ENCODE measurements at regions of chr16 and their contacts with region 1.

Region 1: DNA sequence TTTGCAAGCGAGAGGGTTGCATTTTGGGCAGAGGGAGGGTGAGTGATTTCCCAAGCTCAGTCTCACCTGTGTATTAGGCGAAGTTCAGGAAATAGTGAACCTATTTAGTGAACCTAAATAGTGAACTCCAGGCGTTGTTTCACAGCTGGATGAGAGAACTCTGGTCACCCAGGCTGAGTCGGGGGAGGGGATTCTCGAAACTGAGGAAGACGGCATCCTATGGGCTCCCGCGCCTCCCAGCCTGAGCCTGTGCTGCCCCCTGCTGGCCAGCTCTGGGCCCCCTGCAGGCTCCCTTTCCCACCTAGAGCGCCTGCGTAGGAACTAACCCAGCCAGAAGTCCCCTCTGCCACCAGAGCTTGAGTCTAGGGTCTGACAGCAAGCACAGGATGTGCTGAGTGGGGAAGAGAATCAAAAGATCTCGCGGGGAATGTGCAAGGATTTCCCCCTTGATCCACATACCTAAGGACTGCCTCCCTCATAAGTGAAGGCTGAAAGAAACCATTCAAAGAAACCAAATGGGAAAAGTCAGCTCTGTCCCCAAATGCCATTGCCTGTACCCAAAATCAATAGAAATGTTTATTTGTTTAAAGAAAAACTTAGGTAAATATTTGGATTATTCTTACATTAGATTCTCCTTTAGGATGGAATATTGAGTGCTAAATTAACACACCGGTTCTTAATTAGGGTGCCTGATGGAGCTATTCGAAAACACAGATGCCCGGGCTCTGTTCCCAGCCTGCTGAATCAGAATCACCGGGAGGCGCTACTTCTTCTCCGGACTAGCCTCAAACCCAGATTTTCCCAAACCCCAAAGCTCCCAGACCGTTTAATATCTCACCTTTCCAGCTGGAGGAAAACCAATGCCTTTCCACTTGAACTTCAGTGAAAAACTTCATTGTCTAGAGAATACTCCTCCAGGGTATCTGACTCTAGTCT is 14.8 kb upstream of the MARVELD3 start:
- DNase-seq: peak; percentile 87
- H3K4me3 Mint-ChIP-seq: no peak overlapping the region
- H3K27ac Mint-ChIP-seq: no peak overlapping the region
- H3K4me1 Mint-ChIP-seq: peaks cover 14% of the 10 kb centered on the region
- H3K27me3 Mint-ChIP-seq: peaks cover 2% of the 10 kb centered on the region

Region 2: DNA sequence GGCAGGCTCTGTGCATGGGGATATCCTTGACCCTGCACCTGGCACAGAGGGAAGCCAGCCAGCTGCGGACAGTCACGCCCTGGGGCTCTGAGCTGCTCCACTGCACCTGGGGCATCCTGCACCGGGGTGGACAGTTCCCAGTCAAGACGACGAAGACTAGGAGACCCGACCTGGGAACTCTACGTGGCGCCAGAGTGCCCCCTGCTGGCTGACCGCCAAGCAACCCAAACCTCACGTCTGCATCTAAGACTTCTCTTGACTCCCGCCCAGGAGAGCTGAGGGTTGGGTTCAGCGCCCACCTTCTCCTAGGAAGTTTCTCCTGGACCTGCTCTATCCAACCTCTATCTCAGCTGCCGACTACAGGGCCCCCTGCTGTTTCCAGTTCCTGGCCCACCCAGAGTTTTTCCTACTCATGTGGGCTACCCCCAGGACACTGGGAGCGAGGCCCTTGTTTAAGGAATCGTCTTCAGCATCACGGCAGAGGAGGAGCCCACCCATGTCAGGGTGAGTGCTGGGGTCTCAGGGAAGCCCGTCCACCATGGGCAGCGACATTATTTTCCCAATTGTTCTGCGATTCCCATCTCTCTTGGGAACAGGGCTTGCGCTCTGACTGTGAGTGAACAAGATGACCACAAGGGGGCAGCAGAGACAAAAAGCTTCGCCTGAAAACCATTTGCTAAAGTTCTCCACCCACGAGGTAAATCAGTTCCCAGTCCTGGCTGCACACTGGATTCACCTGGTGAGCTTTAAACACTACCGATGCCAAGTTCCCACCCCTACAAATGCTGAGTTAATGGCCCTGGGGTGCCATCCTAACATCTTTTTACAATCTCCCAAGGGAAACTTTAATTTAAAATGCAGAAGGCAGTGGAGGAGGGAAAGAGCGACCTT is 198.7 kb before region 1 on chr16:
- CTCF ChIA-PET with region 1: interaction called, 35 read pairs
- intact Hi-C with region 1: loop called (anchors 2 kb)
- DNase-seq: peak; percentile 78
- H3K4me3 Mint-ChIP-seq: no peak overlapping the region
- H3K27ac Mint-ChIP-seq: no peak overlapping the region
- H3K4me1 Mint-ChIP-seq: peaks cover 4% of the 10 kb centered on the region
- H3K27me3 Mint-ChIP-seq: peaks cover 36% of the 10 kb centered on the region

Region 3: GRCh38 chr16:71461686-71462648 is 149.2 kb before region 1 on chr16 and contains the start of gene ZNF23:
- CTCF ChIA-PET with region 1: interaction called, 3 read pairs
- intact Hi-C with region 1: loop called (anchors 1 kb)
- DNase-seq: peak; percentile 78
- H3K4me3 Mint-ChIP-seq: peak within 1 kb of the TSS; percentile 89
- H3K27ac Mint-ChIP-seq: peak within 1 kb of the TSS; percentile 91
- H3K4me1 Mint-ChIP-seq: peaks cover 18% of the 10 kb centered on the region
- H3K27me3 Mint-ChIP-seq: no peaks in the 10 kb centered on the region
- total RNA-seq, gene ZNF23: 6.9 to 7.1 TPM

Region 4: GRCh38 chr16:71499775-71500364 is 111.3 kb before region 1 on chr16:
- CTCF ChIA-PET with region 1: interaction called, 30 read pairs
- intact Hi-C with region 1: loop called (anchors 1 kb)
- DNase-seq: peak; percentile 71
- H3K4me3 Mint-ChIP-seq: no peak overlapping the region
- H3K27ac Mint-ChIP-seq: no peak overlapping the region
- H3K4me1 Mint-ChIP-seq: no peaks in the 10 kb centered on the region
- H3K27me3 Mint-ChIP-seq: no peaks in the 10 kb centered on the region

Region 5: DNA sequence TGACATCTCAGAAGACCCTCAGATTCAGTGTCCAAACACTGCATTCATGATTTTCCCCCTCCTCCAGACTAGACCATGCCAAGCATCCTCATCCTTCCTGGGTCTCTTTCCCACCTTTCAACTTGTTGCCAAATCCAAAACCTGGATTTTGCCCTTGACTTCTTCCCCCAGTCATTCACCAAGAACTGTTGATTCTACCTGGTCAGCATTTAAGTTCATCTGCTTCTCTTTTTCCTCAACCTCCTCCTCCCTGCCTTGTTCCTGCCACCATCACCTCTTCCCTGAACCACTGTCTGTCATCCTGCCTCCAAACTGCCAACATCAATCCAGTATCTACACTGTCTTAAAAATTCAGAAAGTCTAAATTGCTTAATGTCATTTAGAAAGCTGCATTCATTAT is 64.0 kb before region 1 on chr16:
- CTCF ChIA-PET with region 1: interaction called, 11 read pairs
- intact Hi-C with region 1: loop called (anchors 1 kb)
- DNase-seq: no peak
- H3K4me3 Mint-ChIP-seq: no peak overlapping the region
- H3K27ac Mint-ChIP-seq: no peak overlapping the region
- H3K4me1 Mint-ChIP-seq: no peaks in the 10 kb centered on the region
- H3K27me3 Mint-ChIP-seq: peaks cover 4% of the 10 kb centered on the region

Region 6: DNA sequence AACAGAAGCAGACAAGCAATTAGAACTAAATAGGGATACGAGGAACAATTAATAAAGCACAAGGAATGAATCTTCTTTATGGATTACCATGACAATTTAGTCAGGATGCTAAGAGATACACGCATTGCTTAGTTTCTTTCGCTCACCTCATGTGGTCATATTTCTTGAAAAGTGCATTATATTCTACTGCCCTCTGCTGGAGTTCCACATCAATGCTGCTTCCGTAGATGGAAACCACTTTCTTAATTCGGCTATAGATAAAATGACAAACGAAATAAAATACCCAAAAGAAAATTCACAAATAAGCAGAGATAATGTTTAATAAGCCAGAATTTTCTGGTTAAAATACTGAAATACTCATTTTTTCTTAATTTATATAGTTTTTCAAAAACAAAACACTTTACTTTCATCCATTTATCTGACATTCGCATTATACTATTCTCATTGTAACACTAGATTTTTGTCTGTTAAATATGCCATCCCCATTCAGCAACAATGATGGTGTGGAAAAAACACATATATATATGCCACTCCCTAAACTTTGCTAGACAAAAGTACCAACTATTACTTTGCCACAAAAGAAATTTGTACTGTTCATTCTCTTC is 135.3 kb after region 1 on chr16:
- CTCF ChIA-PET with region 1: no interaction called
- intact Hi-C with region 1: loop called (anchors 2 kb)
- DNase-seq: peak; percentile 49
- H3K4me3 Mint-ChIP-seq: no peak overlapping the region
- H3K27ac Mint-ChIP-seq: no peak overlapping the region
- H3K4me1 Mint-ChIP-seq: peaks cover 5% of the 10 kb centered on the region
- H3K27me3 Mint-ChIP-seq: no peaks in the 10 kb centered on the region